Endothelial cell of umbilical vein (primary cell): ENCODE measurements at regions of chr6 and their contacts with region 1.

Region 1: DNA sequence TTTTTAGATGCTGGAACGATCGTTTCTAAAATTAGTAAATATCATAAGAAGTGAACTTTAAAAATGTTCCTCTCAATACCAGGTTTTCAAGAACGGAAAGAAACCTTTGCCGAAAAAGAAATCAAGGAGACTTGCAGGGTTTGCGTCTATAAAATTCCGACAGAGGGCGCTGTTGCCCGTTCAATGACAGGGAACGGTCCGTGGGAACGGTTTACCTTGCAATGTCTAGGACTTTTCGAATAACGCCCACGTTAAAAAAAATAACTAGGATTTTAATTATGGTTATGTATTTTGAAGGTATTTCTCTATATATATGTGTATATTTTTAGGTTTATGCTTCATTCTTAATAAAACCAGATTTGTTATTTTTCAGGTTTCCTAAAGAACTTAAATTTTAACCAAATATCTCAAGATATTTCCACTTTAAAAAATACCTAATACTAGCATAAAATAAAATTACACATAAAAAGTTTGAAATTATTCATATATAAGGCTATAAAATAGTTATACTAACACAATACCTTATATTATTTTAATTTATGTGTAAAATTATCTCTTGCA is 2.5 kb upstream of the TFAP2B start:
- DNase-seq: peak; percentile 71
- H3K4me3 ChIP-seq: peak overlapping the region; percentile 42 to 85 (median 74)
- H3K27ac ChIP-seq: no peak overlapping the region
- H3K4me1 ChIP-seq: no peaks in the 10 kb centered on the region
- H3K27me3 ChIP-seq: peaks cover 37 to 49% of the 10 kb centered on the region in 2 experiments
- CTCF ChIP-seq: peak; percentile 58 to 77
- POLR2A ChIP-seq: no peak

Region 2: DNA sequence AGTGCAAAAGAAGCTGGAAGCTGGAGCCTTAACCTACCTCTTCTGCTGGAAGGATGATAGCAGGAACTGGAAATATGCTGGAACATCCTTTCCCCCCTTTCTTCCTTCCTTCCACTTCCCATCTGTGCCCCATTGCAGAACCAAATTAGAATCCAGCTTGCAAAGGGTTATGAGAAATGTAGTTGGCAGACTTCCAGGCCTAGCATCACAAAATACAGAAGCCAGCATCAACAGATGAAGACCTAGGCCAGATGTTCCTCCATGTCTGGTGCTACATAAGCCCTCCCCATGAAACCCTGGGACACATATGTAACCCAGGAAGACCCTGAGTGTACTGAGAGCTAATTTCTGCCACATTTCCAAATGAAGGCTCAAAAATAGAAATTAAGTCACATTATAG is 37.5 kb before region 1 on chr6:
- CTCF ChIA-PET with region 1: no interaction called
- POLR2A ChIA-PET with region 1: no interaction called
- dilution Hi-C with region 1: no loop called
- intact Hi-C with region 1: no loop called
- DNase-seq: no peak
- H3K4me3 ChIP-seq: no peak overlapping the region
- H3K27ac ChIP-seq: no peak overlapping the region
- H3K4me1 ChIP-seq: no peaks in the 10 kb centered on the region
- H3K27me3 ChIP-seq: no peaks in the 10 kb centered on the region
- CTCF ChIP-seq: no peak
- POLR2A ChIP-seq: no peak

Region 3: DNA sequence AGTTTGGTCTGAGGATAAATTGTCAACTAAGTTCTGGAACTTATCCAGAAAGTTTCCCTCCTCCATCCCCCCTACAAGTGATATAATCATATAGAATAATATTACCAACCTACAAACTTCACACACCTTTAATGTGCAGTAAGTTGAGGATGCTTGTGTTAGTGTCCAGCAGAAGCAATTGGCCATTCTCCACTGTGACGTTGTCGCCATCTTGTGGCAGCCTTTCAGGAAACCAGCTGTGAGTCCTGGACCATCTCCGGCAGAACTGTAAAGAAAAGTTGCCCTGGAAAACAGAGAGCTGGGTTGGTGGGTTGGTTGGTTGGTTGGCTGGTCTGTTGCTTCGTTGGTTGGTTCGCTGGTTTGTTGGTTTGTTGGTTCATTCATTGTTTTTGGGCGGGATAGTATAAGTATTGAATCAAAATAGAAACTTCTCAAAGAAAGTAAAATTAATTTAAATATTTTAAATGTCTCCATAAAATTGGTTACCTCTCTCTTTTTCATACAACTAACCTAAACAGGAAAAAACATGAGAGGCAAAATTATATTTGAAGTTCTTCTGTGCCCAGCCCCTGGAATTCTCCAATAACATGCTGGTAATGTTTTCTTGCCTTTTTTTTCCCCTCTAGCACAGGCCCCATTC is 1143.7 kb after region 1 on chr6:
- CTCF ChIA-PET with region 1: interaction called, 34 read pairs
- POLR2A ChIA-PET with region 1: no interaction called
- dilution Hi-C with region 1: no loop called
- intact Hi-C with region 1: loop called (anchors 1 kb)
- DNase-seq: peak; percentile 60
- H3K4me3 ChIP-seq: no peak overlapping the region
- H3K27ac ChIP-seq: no peak overlapping the region
- H3K4me1 ChIP-seq: no peaks in the 10 kb centered on the region
- H3K27me3 ChIP-seq: no peaks in the 10 kb centered on the region
- CTCF ChIP-seq: peak; percentile 58 to 71
- POLR2A ChIP-seq: no peak

Region 4: GRCh38 chr6:52020945-52021570 is 1204.9 kb after region 1 on chr6:
- CTCF ChIA-PET with region 1: interaction called, 20 read pairs
- POLR2A ChIA-PET with region 1: no interaction called
- dilution Hi-C with region 1: no loop called
- intact Hi-C with region 1: loop called (anchors 1 kb)
- DNase-seq: peak; percentile 33
- H3K4me3 ChIP-seq: no peak overlapping the region
- H3K27ac ChIP-seq: no peak overlapping the region
- H3K4me1 ChIP-seq: no peaks in the 10 kb centered on the region
- H3K27me3 ChIP-seq: no peaks in the 10 kb centered on the region
- CTCF ChIP-seq: peak in 1 of 2 donors; percentile 41
- POLR2A ChIP-seq: no peak